Right ventricle myocardium inferior (tissue), 1 donor: ENCODE measurements at regions of chr1 and their contacts with region 1.

Region 1: DNA sequence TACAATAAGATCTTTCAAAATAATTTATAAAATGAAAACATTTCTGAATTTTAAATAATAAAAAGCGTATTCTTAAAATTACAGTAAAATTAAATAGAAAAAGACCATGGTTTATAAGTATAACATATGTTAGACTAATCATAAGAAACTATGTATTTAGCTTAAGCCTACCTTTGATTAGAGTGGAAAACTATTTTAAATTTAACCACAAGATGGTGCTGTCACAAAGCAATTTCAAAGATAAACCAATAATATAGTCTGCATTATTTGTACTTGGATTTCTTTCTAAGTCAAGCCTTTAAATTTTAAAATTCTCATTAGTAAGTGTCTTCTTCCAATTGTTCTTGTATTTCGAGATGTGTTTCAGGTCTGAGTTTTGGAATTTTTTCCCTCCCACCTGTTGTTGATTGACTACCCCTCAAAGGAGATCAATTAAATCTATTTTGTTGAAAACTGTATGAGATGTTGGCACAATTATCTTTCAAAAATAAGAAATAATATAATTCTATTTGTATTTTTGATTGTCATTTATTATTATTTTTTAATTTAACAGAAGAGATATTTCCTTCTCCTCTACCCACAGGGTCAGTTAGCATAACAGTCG is 459.8 kb downstream of the KCNT2 start:
- DNase-seq: no peak
- ATAC-seq: no peak

Region 2: GRCh38 chr1:196312739-196313138 is 164.3 kb after region 1 on chr1:
- intact Hi-C with region 1: loop called (anchors 5 kb)
- DNase-seq: no peak
- ATAC-seq: no peak